ENCODE measurements at regions of chr18 and their contacts with region 1.

Region 1: DNA sequence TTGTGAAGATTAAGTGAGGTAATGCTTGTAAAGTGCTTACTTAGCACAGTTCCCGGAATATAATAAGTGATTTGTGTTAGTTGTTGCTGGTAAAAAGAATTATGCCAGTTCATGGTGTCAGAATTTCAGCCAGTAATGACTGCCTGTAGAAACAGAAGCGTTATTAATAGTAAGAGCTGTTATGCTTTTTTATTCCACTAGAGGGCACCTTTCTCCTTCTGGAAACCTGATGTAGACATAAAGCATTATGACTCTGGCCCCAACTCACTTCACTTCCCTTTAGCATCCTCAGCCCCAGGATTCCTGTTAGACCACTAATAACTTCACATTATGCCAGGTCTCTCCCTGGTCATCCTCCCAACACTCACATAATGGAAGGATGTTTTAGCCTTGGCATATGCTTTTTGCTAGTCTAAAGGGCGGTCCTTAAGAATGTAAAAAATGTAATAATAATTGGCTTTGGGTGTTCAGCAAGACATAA is 34.9 kb downstream of the C18orf54 start:
- DNase-seq: no peak
- H3K4me3 Mint-ChIP-seq: no peak overlapping the region
- H3K27ac Mint-ChIP-seq: no peak overlapping the region
- H3K4me1 Mint-ChIP-seq: peaks cover 4% of the 10 kb centered on the region
- H3K27me3 Mint-ChIP-seq: peaks cover 21% of the 10 kb centered on the region

Region 2: GRCh38 chr18:53909668-53910067 is 482.9 kb before region 1 on chr18:
- CTCF ChIA-PET with region 1: no interaction called
- intact Hi-C with region 1: loop called (anchors 5 kb)
- DNase-seq: peak; percentile 30
- H3K4me3 Mint-ChIP-seq: no peak overlapping the region
- H3K27ac Mint-ChIP-seq: no peak overlapping the region
- H3K4me1 Mint-ChIP-seq: no peaks in the 10 kb centered on the region
- H3K27me3 Mint-ChIP-seq: peaks cover under 1% of the 10 kb centered on the region

Region 3: DNA sequence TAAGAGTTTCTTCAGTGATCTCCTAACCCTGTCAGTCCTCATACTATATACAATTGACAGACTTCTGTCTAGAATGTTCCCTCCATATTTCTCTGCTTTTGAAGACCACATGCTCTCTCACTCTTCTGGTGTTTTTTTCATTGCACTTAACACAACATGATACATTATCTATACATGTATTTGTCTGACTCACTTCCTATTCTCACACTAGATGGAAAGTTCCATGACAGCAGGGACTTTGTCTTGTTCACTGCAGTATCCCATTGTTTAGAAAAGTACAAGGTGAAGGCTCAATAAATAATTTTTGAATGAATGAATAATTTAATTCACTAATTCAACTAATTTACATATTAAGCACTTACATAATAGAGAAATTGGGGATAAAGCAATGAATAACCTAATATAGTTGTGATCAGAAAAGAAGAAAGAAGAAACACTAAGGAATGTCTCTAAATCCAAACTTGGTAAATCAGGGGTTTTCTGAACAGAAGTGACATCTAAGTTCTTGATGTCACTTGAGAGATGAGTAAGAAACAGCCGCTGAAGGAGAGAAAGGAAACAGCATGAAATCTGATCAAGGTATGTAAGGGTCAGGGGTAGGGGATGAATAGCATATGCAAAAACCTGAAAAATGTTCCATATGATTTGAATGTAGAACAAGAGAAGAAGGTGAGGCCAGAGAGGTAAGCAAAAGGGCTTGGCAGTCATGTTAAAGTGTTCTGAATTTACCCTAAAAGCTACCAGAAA is 210.6 kb before region 1 on chr18:
- CTCF ChIA-PET with region 1: no interaction called
- intact Hi-C with region 1: no loop called
- DNase-seq: peak; percentile 20
- H3K4me3 Mint-ChIP-seq: no peak overlapping the region
- H3K27ac Mint-ChIP-seq: no peak overlapping the region
- H3K4me1 Mint-ChIP-seq: peaks cover 9% of the 10 kb centered on the region
- H3K27me3 Mint-ChIP-seq: no peaks in the 10 kb centered on the region

Region 4: GRCh38 chr18:54357660-54358494 is 34.7 kb before region 1 on chr18 and contains the starts of genes C18orf54 and STARD6:
- CTCF ChIA-PET with region 1: interaction called, 3 read pairs
- intact Hi-C with region 1: loop called (anchors 1 kb)
- DNase-seq: peak; percentile 89
- H3K4me3 Mint-ChIP-seq: peak within 1 kb of the TSS; percentile 100
- H3K27ac Mint-ChIP-seq: peak within 1 kb of the TSS; percentile 95
- H3K4me1 Mint-ChIP-seq: peaks cover 12% of the 10 kb centered on the region
- H3K27me3 Mint-ChIP-seq: peaks cover 5% of the 10 kb centered on the region
- total RNA-seq, gene C18orf54: 10.2 to 11.5 TPM
- total RNA-seq, gene STARD6: not detected

Region 5: DNA sequence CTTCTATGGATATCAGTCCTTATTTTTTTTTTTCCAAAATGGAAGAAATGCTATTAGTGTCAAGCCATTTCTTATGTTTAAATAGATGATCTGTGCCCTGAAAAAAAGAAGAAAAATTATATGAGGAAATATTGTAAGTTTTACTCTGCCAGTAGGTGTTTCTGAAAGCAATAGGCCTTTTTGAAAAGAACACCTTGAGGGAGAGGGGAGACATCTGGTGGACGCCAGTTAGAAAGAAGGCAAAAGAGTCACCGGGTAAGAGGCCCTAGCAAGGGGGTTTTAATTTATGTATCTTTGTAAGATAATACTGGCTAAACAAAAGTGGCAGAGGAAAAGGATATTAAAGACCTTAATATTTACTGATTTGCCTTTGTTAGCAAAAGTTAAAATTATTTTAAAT is 254.6 kb after region 1 on chr18:
- CTCF ChIA-PET with region 1: interaction called, 3 read pairs
- intact Hi-C with region 1: loop called (anchors 5 kb)
- DNase-seq: peak; percentile 27
- H3K4me3 Mint-ChIP-seq: no peak overlapping the region
- H3K27ac Mint-ChIP-seq: no peak overlapping the region
- H3K4me1 Mint-ChIP-seq: no peaks in the 10 kb centered on the region
- H3K27me3 Mint-ChIP-seq: peaks cover 10% of the 10 kb centered on the region

Region 6: DNA sequence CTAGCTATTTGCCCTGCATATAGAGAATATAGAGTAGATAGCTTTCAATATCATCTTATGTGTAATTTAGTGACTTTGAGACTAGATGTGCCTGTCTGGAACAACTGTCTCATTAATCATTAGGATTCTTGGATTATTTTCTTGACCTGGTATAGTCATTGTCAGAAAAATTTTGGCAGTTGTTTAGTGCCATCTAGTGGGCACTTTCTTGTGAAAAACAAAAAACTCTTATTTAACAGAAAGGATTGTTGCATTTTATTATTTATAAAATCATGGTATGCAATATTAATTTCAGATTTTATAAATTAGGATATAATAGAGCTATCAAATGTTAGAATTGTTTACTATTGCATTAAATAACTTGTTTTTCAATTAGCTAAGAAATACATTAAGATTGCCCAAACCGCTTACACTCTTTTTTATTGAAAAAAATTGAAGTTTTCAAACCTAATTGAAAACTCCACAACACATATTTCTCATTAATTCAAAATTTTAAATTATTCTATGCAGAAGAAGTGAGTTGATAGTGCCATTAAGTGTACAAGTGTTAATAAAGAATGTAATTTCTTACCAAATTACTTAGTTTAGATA is 278.8 kb after region 1 on chr18:
- CTCF ChIA-PET with region 1: interaction called, 13 read pairs
- intact Hi-C with region 1: loop called (anchors 1 kb)
- DNase-seq: no peak
- H3K4me3 Mint-ChIP-seq: no peak overlapping the region
- H3K27ac Mint-ChIP-seq: no peak overlapping the region
- H3K4me1 Mint-ChIP-seq: no peaks in the 10 kb centered on the region
- H3K27me3 Mint-ChIP-seq: peaks cover 7% of the 10 kb centered on the region

Region 7: GRCh38 chr18:54766619-54767018 is 374.0 kb after region 1 on chr18:
- CTCF ChIA-PET with region 1: no interaction called
- intact Hi-C with region 1: no loop called
- DNase-seq: no peak
- H3K4me3 Mint-ChIP-seq: no peak overlapping the region
- H3K27ac Mint-ChIP-seq: no peak overlapping the region
- H3K4me1 Mint-ChIP-seq: no peaks in the 10 kb centered on the region
- H3K27me3 Mint-ChIP-seq: peaks cover 9% of the 10 kb centered on the region

Region 8: GRCh38 chr18:54873884-54874255 is 481.3 kb after region 1 on chr18:
- CTCF ChIA-PET with region 1: no interaction called
- intact Hi-C with region 1: no loop called
- DNase-seq: no peak
- H3K4me3 Mint-ChIP-seq: no peak overlapping the region
- H3K27ac Mint-ChIP-seq: no peak overlapping the region
- H3K4me1 Mint-ChIP-seq: peaks cover 2% of the 10 kb centered on the region
- H3K27me3 Mint-ChIP-seq: no peaks in the 10 kb centered on the region

Region 9: GRCh38 chr18:54983041-54983686 is 590.6 kb after region 1 on chr18:
- CTCF ChIA-PET with region 1: no interaction called
- intact Hi-C with region 1: loop called (anchors 2 kb)
- DNase-seq: no peak
- H3K4me3 Mint-ChIP-seq: no peak overlapping the region
- H3K27ac Mint-ChIP-seq: no peak overlapping the region
- H3K4me1 Mint-ChIP-seq: no peaks in the 10 kb centered on the region
- H3K27me3 Mint-ChIP-seq: no peaks in the 10 kb centered on the region

Measured in activated naive CD4-positive, alpha-beta T cell treated with anti-CD3 and anti-CD28 coated beads for 36 hours (primary cell).